ENCODE measurements at regions of chr10 and their contacts with region 1.

Region 1: DNA sequence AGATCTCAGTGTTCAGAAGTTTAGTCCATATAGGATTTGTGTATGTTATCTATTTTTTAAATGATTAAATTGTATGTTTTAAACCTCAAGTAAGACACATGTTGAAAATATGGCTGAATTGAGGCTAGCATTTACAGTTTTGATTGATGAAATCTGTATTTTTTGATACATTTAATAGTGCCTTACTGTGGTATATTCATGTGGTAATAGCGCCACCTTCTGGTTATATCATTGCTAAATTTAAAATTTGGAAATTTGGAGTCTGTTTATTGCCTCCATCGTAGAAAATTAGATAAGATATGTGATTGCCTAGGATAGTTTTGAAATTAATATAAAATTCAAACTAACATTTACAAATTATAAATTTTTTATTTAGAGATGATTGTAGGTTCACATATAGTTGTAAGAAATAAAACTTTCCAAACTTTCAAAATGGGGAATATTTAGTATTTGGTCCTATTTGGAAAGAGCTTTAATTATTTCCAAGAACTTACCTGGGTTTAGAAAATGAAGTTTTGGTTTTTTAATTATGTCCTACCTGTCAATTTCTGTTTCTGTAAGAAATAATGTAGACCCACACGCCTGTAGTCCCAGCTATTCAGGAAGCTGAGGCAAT is 19.1 kb upstream of the ARMS2 start:
- DNase-seq: no peak
- ATAC-seq: peak; percentile 49

Region 2: GRCh38 chr10:122298598-122299301 is 136.6 kb before region 1 on chr10:
- intact Hi-C with region 1: loop called (anchors 5 kb)
- DNase-seq: peak; percentile 86
- ATAC-seq: peak; percentile 85

Region 3: DNA sequence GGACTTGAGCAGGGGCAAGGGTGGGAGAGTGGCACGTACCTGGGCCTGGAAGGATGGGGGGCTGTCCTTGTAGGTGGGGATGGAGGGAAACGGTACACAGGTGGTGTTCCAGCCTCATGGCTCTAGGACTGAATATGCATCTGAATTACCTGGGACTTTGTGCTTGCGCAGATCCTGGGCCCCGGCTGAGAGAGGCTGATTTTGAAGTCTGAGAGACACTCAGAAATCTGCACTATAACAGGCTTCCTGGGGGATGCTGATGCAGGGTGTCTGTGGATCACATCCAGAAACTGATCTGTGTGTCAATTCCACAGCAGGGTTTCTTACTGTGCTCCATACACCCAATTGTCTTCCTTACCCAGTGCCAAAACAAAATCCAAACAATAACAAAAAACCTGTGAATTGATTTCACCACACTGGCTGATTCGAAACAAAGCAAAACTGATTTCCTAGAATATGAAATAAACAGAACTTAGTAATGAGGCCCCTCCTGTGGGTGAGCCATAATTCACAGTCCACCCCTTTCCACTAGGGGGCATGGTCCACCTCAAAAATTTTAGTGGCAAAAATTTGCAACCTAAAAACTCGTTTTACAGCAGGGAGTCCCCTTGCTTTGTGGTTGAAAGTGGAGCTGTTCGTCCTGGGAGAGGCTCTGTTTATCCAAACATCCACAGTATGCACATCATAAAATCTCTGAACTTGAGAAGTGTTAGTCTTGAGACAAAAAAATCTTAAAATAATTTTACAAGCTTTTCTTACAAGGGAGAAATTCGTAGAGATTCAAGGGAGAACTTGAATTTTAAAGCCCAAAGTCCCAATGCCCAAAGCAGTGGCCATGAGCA is 92.8 kb before region 1 on chr10:
- intact Hi-C with region 1: loop called (anchors 10 kb)
- DNase-seq: no peak
- ATAC-seq: peak; percentile 79

Measured in sciatic nerve (tissue), 2 donors.